AG04449 (cell line): ENCODE measurements at regions of chr17 and their contacts with region 1.

Region 1: GRCh38 chr17:37047631-37048104 is 98.9 kb downstream of the AATF start:
- DNase-seq: peak; percentile 36
- H3K4me3 ChIP-seq: no peak overlapping the region
- CTCF ChIP-seq: peak; percentile 76

Region 2: DNA sequence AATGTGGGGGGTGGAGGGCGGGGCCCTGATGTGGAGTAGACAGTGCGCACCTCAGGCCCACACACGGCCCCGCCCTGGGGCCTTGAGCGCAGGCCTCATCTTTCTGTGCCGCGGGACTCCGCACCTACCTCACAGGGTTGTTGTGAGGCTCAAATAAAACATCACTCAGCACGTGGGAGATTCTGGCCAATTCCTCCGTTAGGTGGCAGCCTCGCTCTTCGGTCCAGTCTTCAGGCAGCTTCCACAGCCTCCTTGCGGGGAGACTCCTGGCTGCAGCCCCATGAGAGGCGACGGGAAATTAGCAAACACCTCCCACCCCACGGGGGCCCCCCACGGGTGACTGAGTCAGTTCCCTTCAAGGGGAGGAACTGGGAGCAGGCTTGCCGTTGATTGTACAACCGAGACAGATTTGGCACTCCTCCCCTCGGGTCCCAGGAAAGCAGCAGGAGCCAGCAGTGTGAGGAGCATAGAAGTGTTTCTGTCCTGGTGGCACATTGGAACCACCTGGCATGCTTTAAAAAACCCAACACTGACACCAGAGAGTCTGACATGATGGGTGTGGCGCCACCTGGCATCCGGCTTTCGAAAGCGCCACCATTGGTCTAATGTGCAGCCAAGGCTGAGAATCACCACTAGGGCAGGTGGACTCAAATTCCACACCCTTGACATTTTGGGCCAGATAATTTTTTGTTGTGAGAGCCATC is 438.7 kb before region 1 on chr17:
- CTCF ChIA-PET with region 1: interaction called, 78 read pairs
- POLR2A ChIA-PET with region 1: no interaction called
- DNase-seq: no peak
- H3K4me3 ChIP-seq: no peak overlapping the region
- CTCF ChIP-seq: peak; percentile 76

Region 3: DNA sequence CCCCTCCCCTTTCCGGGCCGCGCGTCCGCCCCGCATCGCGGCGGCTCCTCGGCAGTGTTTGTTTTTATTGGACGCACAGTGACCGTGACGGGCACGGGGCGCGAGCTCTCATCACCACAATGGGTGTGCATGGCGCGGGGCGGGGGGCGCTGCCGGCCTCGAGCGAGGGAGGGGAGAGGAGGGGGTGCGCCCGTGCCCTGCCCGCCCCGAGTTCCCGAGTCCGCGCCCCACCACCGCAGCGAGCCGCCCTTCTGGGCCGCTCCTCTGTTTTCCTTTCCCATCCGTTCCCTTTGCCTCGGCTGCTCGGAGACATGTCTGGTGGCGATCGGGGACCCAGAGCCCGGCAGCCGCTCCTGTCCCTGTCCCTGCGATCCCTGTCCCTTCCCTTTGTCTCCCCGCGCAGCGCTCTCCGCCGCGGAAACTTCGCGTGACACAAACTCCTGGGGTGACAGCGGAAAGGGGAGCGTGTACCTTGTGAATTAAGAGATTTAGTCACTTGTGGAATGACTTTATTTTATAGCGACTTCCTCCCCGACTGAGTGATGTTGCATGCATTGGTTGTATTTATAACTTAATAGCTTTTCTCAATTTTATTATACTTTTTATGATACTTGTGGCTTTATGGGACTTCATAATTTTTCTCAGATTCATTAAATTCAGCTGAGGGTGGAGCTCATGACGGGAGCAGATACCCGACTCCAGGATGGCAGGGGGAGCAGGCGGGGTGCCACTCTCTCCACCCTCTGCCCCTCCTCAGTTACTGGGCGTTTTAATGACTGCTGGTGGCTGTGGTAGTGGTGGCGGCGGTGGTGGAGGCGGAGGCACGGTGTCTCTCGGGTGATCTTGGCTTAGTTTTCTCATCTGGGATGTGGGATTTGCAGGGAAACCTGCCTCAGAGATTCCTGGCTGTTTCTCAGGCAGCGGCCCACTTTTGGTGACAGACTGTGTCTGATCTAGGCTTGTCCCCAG is 405.5 kb before region 1 on chr17:
- CTCF ChIA-PET with region 1: interaction called, 44 read pairs
- POLR2A ChIA-PET with region 1: no interaction called
- DNase-seq: no peak
- H3K4me3 ChIP-seq: peak overlapping the region; percentile 27
- CTCF ChIP-seq: no peak

Region 4: DNA sequence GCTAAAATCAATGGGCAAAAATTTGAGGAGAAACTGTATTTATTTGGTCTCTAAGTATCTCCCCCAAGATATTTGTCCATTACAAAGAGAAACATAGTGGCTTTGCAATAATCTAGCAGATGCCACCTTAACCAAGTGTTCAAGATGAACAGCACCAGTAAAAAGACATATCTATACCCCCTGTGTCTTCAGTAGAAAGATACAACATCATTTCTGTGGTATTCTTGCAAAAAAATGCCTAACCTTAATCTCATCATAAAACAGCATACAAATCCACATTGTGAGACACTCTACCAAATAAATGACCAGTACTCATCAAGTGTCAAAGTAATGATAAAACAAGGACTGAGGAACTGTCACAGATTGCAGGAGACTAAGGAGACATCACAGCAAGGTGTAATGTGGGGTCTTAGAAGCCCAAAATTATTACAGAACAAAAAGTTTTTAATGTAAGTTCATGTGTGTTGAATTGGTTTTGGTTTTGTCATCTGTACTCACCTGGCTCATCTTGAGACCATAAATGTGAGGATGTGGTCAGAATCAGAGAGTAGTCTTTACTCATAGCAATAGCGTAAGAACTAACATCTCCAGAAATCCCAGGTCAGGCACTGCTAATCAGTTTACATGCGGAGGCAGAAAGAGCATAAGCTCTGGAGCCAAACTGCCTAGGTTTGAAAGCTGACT is 21.7 kb before region 1 on chr17:
- CTCF ChIA-PET with region 1: interaction called, 22 read pairs
- POLR2A ChIA-PET with region 1: no interaction called
- DNase-seq: no peak
- H3K4me3 ChIP-seq: no peak overlapping the region
- CTCF ChIP-seq: no peak

Region 5: GRCh38 chr17:37084372-37084771 is 36.7 kb after region 1 on chr17:
- CTCF ChIA-PET with region 1: interaction called, 14 read pairs
- POLR2A ChIA-PET with region 1: no interaction called
- DNase-seq: no peak
- H3K4me3 ChIP-seq: no peak overlapping the region
- CTCF ChIP-seq: no peak

Region 6: GRCh38 chr17:37160944-37161343 is 113.3 kb after region 1 on chr17:
- CTCF ChIA-PET with region 1: no interaction called
- POLR2A ChIA-PET with region 1: no interaction called
- DNase-seq: no peak
- H3K4me3 ChIP-seq: no peak overlapping the region
- CTCF ChIP-seq: no peak

Region 7: DNA sequence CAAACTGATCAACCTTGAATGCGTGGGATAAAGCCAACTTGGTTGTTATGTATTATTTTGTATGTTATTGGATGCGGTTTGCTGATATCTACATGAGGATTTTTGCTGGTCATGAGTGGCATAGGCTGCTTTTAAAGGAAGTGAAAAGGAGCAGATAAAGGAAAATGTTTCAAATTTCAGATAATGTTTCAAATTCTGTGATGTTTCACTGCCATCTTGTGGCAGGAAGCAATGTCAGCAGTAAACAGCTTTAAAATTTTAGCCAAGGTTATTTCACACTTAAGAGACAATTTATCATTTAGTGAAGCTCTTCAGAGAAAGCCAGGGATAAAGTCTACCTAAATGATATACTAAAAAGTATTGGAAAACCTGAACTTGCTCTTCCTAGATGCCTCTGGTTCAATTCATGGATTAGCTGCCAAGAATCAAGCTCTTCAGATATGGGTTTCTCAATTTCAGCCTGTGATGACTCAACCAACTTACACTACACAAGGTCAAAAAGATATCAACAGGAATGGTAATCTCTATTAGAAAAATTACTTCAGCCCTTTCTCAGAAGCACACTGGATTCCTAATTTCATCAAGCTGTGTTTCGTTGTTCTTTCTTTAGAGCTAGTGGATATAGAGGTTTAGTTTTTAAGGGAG is 192.1 kb after region 1 on chr17:
- CTCF ChIA-PET with region 1: interaction called, 19 read pairs
- POLR2A ChIA-PET with region 1: no interaction called
- DNase-seq: no peak
- H3K4me3 ChIP-seq: no peak overlapping the region
- CTCF ChIP-seq: peak; percentile 58

Region 8: DNA sequence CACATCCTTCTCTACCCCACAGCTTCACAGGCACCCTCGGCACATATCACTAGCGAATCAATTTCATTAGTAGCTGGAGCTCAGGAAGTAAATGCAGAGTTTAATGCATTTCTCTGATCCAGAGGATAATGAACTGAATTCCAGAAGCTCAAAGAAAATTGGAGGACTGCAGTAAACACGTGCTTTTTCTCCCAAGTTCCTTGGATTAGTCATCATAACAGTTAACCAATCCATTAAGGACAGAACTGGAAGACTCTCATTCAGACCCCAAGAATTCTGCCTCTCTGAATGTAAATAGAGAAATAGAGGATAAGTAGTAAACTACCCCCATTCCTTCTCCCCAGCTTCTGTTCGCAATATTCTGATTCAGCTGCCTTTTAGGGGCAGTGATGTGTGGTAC is 482.8 kb after region 1 on chr17:
- CTCF ChIA-PET with region 1: no interaction called
- POLR2A ChIA-PET with region 1: no interaction called
- DNase-seq: no peak
- H3K4me3 ChIP-seq: no peak overlapping the region
- CTCF ChIP-seq: no peak